ENCODE measurements at regions of chr7 and their contacts with region 1.

Region 1: DNA sequence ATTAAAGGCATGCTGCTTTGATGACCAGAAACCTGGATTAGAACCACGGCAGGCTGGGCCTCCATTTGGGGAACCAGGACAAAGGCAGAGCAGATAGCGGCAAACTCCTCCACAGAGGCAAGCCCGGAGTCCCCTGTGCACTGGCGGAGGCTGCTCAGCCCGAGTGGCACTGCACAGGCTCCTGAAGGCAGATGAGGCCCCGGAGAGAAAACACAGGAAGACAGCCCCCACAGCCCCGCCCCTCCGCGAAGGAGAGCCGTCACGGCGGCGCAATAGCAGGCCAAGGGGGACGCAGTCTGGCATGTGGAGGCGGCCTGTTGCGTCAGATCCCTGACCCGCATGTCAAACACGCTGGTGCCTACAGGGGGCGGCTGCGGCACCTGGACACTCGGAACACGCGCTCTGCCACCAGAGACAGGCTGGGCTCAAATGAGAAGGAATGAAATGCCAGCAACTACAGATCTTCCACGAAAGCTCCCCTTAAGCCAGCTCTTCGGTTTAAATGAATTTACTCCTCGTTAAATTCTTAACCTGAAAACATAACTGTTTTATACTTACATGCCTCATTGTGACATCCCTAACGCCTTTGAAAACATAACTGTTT is 128.5 kb downstream of the MAD1L1 start:
- DNase-seq: peak; percentile 86 to 90
- ATAC-seq: peak; percentile 78 to 91 (median 86)
- H3K4me3 ChIP-seq: peak overlapping the region in 5 of 10 donors; percentile 6 to 35 (median 24)
- H3K27ac ChIP-seq: peak overlapping the region in 7 of 10 donors; percentile 21 to 56 (median 35)
- H3K4me1 ChIP-seq: peaks cover 6 to 50% (median 34%) of the 10 kb centered on the region in 9 donors
- H3K27me3 ChIP-seq: no peaks in the 10 kb centered on the region
- CTCF ChIP-seq: peak; percentile 56 to 82 (median 71)

Region 2: GRCh38 chr7:1812509-1813393 is 291.5 kb before region 1 on chr7:
- intact Hi-C with region 1: no loop called
- DNase-seq: no peak
- ATAC-seq: peak in 5 of 8 donors; percentile 15 to 78 (median 42)
- H3K4me3 ChIP-seq: no peak overlapping the region
- H3K27ac ChIP-seq: no peak overlapping the region
- H3K4me1 ChIP-seq: peaks cover 0 to 17% (median 8%) of the 10 kb centered on the region in 9 donors
- H3K27me3 ChIP-seq: peaks cover 0 to 3% (median 0%) of the 10 kb centered on the region in 7 donors
- CTCF ChIP-seq: peak in 7 of 9 donors; percentile 26 to 65 (median 41)

Region 3: DNA sequence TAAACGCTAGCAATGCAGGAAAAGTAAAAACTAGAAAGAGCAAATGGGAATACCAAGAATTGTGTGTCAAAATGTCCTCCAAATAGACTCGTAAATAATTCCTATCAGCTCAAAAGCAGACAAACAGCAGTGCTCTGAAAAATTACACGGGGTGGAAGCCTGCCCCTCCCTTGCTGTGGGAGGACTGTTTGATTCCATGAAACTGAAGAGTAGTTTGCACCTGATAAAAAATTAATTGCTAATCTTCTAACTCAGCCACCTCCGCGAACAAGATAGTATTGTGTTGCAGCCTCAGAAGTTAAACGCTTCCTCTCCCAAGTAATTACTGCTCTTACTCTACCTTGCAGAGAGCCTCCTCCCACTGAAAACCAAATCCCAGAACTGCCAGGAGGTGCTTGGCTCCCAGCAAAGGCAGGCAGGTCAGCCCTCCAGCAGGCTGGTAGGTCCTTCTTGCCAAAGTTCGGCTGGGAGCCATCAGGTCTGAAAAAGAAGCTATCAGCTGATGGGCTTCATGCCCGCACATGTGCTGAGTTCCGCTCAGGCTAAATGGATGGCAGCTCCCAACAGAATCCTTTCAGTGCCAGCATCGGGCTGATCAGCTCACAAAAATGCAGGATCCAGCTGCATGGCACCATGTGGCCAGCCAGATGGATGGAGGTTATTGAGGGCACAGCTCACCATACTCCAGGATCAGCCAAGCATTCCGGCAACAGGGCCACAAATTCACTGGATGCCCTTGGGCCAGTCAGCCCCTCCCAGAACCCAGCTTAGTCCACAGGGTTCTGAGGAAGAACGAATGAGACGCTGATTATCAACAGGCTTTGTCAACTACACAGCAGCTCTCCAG is 91.4 kb after region 1 on chr7:
- intact Hi-C with region 1: loop called in 7 of 10 experiments (anchors 5 to 10 kb)
- DNase-seq: peak; percentile 50
- ATAC-seq: peak; percentile 41 to 77 (median 62)
- H3K4me3 ChIP-seq: no peak overlapping the region
- H3K27ac ChIP-seq: peak overlapping the region in 7 of 10 donors; percentile 13 to 69 (median 55)
- H3K4me1 ChIP-seq: peaks cover 6 to 29% (median 22%) of the 10 kb centered on the region in 9 donors
- H3K27me3 ChIP-seq: no peaks in the 10 kb centered on the region
- CTCF ChIP-seq: no peak

Region 4: GRCh38 chr7:2203766-2204300 is 99.6 kb after region 1 on chr7:
- intact Hi-C with region 1: loop called in 9 of 10 experiments (anchors 2 to 10 kb)
- DNase-seq: no peak
- ATAC-seq: peak in 5 of 8 donors; percentile 9 to 53 (median 30)
- H3K4me3 ChIP-seq: no peak overlapping the region
- H3K27ac ChIP-seq: no peak overlapping the region
- H3K4me1 ChIP-seq: peaks cover 0 to 15% (median 8%) of the 10 kb centered on the region in 9 donors
- H3K27me3 ChIP-seq: no peaks in the 10 kb centered on the region
- CTCF ChIP-seq: no peak